Activated CD4-positive, alpha-beta memory T cell treated with anti-CD3 and anti-CD28 coated beads for 36 hours (primary cell): ENCODE measurements at regions of chr17 and their contacts with region 1.

Region 1: GRCh38 chr17:50478391-50479381 is at the start of gene RSAD1:
- DNase-seq: peak; percentile 92
- H3K4me3 Mint-ChIP-seq: peak within 1 kb of the TSS; percentile 84
- H3K27ac Mint-ChIP-seq: peak within 1 kb of the TSS; percentile 87
- H3K4me1 Mint-ChIP-seq: peaks cover 24% of the 10 kb centered on the region
- H3K27me3 Mint-ChIP-seq: no peaks in the 10 kb centered on the region
- total RNA-seq, gene RSAD1: 31.9 to 37.2 TPM

Region 2: DNA sequence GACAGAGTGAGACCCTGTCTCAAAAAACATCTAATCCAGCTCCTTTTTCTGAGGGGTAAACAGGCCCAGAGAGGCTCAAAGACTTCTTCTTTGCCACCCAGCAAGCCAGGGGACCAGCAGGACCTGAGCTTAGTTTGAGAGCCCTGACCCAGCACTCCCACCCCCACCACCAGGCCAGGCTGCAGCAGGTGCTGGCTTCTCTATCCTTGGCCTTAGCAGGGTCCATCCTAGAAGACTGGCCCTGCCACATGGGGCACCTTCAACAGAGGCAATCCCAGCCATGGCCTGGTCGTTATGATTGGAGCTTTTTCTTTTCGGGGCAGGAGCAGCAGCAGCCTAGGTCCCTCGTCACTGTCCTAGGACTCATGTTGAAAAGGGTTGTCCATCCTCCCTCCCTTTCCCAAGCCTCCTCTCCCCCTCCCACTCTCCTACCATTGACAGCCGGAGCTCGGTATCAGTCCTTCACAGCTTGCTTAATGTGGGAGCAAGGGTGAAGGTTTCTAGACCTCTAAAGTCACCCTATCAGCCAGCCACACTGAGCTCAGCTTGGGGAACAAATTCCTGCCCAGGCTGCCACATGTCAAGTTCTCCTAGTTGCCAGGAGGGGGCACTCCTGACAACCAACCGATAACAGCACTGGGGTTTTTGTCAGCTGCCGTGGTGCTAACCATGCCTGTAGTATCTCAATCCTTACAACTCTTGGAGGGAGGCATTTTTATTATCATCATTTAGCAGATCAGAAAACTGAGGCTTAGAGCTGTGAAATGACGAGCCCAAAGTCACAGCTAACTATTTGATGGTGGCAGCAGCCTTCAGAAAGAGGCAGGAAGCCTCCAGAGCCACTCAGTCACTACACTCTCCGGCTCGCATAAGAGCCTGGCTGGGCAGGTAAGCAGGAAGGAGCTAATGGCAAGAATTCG is 116.9 kb before region 1 on chr17:
- CTCF ChIA-PET with region 1: interaction called, 14 read pairs
- POLR2A ChIA-PET with region 1: no interaction called
- intact Hi-C with region 1: loop called (anchors 1 kb)
- DNase-seq: peak; percentile 75
- H3K4me3 Mint-ChIP-seq: no peak overlapping the region
- H3K27ac Mint-ChIP-seq: peak overlapping the region; percentile 75
- H3K4me1 Mint-ChIP-seq: peaks cover 9% of the 10 kb centered on the region
- H3K27me3 Mint-ChIP-seq: no peaks in the 10 kb centered on the region

Region 3: GRCh38 chr17:50425682-50426471 is 52.8 kb before region 1 on chr17 and contains the start of gene ACSF2:
- CTCF ChIA-PET with region 1: interaction called, 4 read pairs
- POLR2A ChIA-PET with region 1: no interaction called
- intact Hi-C with region 1: loop called (anchors 2 kb)
- DNase-seq: peak; percentile 83
- H3K4me3 Mint-ChIP-seq: peak within 1 kb of the TSS; percentile 81
- H3K27ac Mint-ChIP-seq: peak within 1 kb of the TSS; percentile 43
- H3K4me1 Mint-ChIP-seq: peaks cover 27% of the 10 kb centered on the region
- H3K27me3 Mint-ChIP-seq: no peaks in the 10 kb centered on the region
- total RNA-seq, gene ACSF2: 20.1 to 23.6 TPM

Region 4: DNA sequence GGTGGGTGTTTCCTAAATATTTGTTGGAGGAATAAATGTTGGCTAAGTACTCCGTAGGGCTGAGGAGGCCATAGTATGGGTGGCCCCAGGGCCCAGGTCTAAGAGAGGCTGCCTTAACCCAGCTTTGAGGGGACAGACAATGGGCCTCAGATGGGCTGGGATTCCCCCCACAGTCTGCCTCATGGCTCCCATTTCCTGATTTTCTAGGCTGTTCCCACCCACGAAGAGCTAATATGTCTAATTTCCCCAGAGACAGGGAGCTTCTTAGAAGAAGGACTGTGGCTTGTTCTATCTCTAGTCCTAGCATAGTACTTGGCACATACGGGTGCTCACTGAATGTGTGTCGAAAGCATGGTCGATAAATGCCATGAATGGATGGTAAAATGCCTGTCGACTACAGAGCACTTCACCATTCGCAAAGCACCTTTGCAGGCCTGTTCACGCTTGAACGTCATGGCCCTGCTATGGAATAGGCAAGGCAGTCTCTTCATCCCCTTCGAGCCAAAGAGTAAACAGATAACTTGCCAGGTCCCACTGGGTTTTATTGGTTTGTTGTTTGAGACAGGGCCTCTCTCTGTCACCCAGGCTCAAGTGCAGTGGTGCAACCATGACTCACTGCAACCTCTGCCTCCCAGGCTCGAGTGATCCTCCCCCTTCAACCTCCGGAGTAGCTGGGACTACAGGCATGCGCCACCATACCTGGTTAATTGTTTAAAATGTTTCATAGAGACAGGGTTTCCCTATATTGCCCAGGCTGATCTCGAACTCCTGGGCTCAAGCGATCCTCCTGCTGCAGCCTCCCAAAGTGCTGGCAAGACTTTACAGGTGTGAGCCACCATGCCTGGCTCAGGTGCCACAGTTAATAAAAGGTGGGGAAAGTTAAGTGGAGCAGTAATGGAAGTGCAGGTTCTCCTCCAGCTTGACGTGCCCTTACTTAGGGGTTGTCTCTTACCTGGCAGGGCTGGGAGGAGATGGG is 19.7 kb before region 1 on chr17:
- CTCF ChIA-PET with region 1: no interaction called
- POLR2A ChIA-PET with region 1: no interaction called
- intact Hi-C with region 1: no loop called
- DNase-seq: no peak
- H3K4me3 Mint-ChIP-seq: no peak overlapping the region
- H3K27ac Mint-ChIP-seq: no peak overlapping the region
- H3K4me1 Mint-ChIP-seq: no peaks in the 10 kb centered on the region
- H3K27me3 Mint-ChIP-seq: no peaks in the 10 kb centered on the region

Region 5: GRCh38 chr17:50501054-50501453 is 22.4 kb after region 1 on chr17:
- CTCF ChIA-PET with region 1: interaction called, 30 read pairs
- POLR2A ChIA-PET with region 1: no interaction called
- intact Hi-C with region 1: no loop called
- DNase-seq: peak; percentile 49
- H3K4me3 Mint-ChIP-seq: no peak overlapping the region
- H3K27ac Mint-ChIP-seq: no peak overlapping the region
- H3K4me1 Mint-ChIP-seq: peaks cover 12% of the 10 kb centered on the region
- H3K27me3 Mint-ChIP-seq: peaks cover 2% of the 10 kb centered on the region

Region 6: DNA sequence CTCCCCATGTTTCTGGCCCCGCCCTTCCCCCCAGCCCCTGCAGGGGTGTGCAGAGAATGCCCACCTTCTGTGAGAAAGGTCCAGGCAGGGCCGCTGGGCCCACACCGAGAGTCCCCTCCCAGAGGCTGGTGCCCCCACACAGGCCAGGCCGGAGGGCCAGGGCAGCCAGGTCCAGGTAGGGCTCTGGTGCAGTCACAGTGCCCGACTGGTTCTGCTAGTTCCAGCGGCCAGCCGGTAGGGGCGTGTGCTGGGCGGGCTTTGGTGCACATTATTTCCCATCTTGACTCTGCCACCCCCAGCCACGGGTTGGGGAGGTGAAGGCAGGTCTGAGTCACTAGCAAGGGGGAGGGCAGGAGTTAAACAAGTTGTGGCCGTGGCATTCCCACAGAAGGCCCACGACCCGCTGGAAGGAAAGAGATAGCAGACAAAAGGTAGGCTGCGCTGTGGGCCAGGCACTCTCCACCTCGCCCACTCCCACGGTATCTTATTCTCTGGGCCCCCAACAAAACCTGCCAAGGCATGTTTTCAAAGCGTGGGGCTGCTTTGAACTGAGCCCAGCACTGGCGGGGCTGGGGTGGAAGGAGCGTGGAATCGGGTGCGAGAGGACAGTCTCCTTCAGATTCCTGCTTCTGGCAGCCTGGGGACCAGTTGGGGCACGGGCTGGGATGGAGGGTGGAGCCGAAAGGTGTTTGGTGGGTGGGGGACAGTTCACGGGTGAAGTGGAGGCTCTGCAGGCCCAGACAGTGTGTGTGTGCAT is 55.7 kb after region 1 on chr17:
- CTCF ChIA-PET with region 1: interaction called, 3 read pairs
- POLR2A ChIA-PET with region 1: no interaction called
- intact Hi-C with region 1: loop called (anchors 2 kb)
- DNase-seq: peak; percentile 63
- H3K4me3 Mint-ChIP-seq: no peak overlapping the region
- H3K27ac Mint-ChIP-seq: no peak overlapping the region
- H3K4me1 Mint-ChIP-seq: peaks cover 16% of the 10 kb centered on the region
- H3K27me3 Mint-ChIP-seq: peaks cover 43% of the 10 kb centered on the region

Region 7: GRCh38 chr17:50626037-50626574 is 147.4 kb after region 1 on chr17:
- CTCF ChIA-PET with region 1: interaction called, 19 read pairs
- POLR2A ChIA-PET with region 1: no interaction called
- intact Hi-C with region 1: loop called (anchors 1 kb)
- DNase-seq: peak; percentile 78
- H3K4me3 Mint-ChIP-seq: no peak overlapping the region
- H3K27ac Mint-ChIP-seq: no peak overlapping the region
- H3K4me1 Mint-ChIP-seq: no peaks in the 10 kb centered on the region
- H3K27me3 Mint-ChIP-seq: peaks cover 31% of the 10 kb centered on the region